B cell (primary cell): ENCODE measurements at regions of chr17 and their contacts with region 1.

Region 1: DNA sequence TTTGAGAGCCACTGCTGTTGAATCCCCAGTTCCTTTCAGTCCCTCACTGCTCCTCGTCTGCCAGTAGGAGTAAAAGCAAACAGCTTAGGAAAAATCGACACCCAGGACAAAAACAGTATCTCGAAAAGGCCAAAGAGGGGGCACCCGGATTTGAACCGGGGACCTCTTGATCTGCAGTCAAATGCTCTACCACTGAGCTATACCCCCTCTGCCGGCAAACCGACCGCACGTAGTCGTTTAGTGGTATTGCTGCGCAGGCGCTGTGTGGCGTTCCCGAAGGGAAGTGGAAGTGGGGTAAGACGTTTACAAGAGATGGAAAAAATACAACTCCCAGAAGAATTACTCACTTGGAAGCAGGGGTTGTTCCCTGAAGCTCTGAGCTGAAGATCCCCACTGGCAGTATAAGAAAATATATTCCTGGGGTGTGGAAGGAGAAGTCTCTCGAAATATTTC is 2.2 kb upstream of the PLXDC1 start:
- DNase-seq: peak; percentile 94
- ATAC-seq: peak; percentile 59
- H3K4me3 ChIP-seq: peak overlapping the region; percentile 62 to 93 (median 82)
- H3K4me3 Mint-ChIP-seq: peak overlapping the region; percentile 94
- H3K27ac ChIP-seq: peak overlapping the region; percentile 53 to 62
- H3K27ac Mint-ChIP-seq: peak overlapping the region; percentile 99
- H3K4me1 ChIP-seq: peaks cover 25 to 34% of the 10 kb centered on the region in 2 donors
- H3K4me1 Mint-ChIP-seq: peaks cover 30% of the 10 kb centered on the region
- H3K27me3 ChIP-seq: peaks cover 0 to 34% (median 17%) of the 10 kb centered on the region in 4 experiments
- H3K27me3 Mint-ChIP-seq: peaks cover 30% of the 10 kb centered on the region
- CTCF ChIP-seq: no peak

Region 2: DNA sequence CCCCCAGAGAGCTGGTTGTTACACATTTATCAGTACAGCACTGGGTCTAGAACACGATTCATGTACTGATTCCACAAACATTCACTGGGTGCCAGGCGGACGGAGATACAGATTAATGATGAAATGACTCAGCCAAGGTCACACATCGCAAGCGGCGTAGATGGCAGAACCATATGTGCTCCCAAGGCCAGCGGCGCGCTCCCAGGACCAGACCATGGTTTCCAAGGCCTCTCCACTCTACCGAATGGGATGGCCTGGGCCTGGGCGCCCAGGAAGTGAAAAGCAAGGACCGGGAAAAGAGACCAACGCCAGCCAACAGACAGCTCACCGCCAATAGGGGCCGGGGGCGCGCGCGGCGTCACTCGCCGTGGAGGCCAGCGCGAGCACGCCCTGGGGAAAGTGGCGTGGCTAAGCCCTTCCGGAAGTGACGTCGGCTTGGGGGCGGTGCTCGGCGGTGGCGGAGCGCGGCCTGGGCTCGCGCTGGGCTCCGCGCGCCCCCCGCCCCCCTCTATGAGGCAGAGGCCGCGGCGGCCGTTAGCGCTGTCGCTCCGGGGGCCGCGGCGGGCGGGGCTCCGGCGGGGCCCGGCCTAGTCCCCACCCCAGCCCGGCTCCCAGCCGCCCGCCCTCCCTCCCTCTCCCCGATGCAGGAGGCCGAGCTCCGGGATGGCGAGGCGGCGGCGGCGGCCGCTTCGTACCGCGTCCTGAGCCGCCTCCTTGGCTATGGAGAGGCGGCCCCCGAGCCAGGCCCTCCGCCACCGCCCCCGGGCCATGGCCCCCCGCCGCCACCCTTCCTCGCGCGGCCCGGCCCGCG is 802.0 kb before region 1 on chr17 and contains the start of gene SOCS7:
- CTCF ChIA-PET with region 1: no interaction called
- POLR2A ChIA-PET with region 1: no interaction called
- intact Hi-C with region 1: loop called (anchors 5 kb)
- DNase-seq: peak; percentile 94
- ATAC-seq: peak; percentile 92
- H3K4me3 ChIP-seq: peak within 1 kb of the TSS; percentile 38 to 78 (median 70)
- H3K4me3 Mint-ChIP-seq: peak within 1 kb of the TSS; percentile 99
- H3K27ac ChIP-seq: peak within 1 kb of the TSS; percentile 71 to 73
- H3K27ac Mint-ChIP-seq: peak within 1 kb of the TSS; percentile 97
- H3K4me1 ChIP-seq: peaks cover 11 to 19% of the 10 kb centered on the region in 2 donors
- H3K4me1 Mint-ChIP-seq: peaks cover 31% of the 10 kb centered on the region
- H3K27me3 ChIP-seq: no peaks in the 10 kb centered on the region
- H3K27me3 Mint-ChIP-seq: no peaks in the 10 kb centered on the region
- CTCF ChIP-seq: no peak
- total RNA-seq, gene SOCS7: 20.8 and 23.3 TPM in 2 replicates

Region 3: DNA sequence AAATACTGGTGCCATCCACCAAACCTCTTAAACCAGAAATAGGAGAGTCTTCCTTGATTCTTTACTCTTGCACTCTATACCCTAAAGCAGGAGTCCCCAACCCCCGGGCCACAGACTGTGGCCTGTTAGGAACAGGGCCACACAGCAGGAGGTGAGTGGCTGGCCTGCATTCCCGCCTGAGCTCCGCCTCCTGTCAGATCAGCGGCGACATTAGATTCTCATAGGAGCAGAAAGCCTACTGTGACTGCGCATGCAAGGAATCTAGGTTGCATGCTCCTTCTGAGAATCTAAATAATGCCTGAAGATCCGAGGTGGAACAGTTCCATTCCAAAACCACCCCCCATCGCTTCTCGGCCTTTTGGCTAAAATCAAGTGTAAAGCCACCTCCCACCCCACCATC is 517.6 kb before region 1 on chr17:
- CTCF ChIA-PET with region 1: no interaction called
- POLR2A ChIA-PET with region 1: no interaction called
- intact Hi-C with region 1: no loop called
- DNase-seq: no peak
- ATAC-seq: no peak
- H3K4me3 ChIP-seq: no peak overlapping the region
- H3K4me3 Mint-ChIP-seq: no peak overlapping the region
- H3K27ac ChIP-seq: no peak overlapping the region
- H3K27ac Mint-ChIP-seq: no peak overlapping the region
- H3K4me1 ChIP-seq: no peaks in the 10 kb centered on the region
- H3K4me1 Mint-ChIP-seq: no peaks in the 10 kb centered on the region
- H3K27me3 ChIP-seq: peaks cover 0 to 7% (median 2%) of the 10 kb centered on the region in 4 experiments
- H3K27me3 Mint-ChIP-seq: peaks cover 37% of the 10 kb centered on the region
- CTCF ChIP-seq: no peak

Region 4: GRCh38 chr17:38868817-38869525 is 284.7 kb before region 1 on chr17:
- CTCF ChIA-PET with region 1: interaction called, 22 read pairs
- POLR2A ChIA-PET with region 1: interaction called, 15 read pairs
- intact Hi-C with region 1: loop called (anchors 1 kb)
- DNase-seq: peak; percentile 93
- ATAC-seq: peak; percentile 50
- H3K4me3 ChIP-seq: peak overlapping the region; percentile 43 to 100 (median 100)
- H3K4me3 Mint-ChIP-seq: peak overlapping the region; percentile 99
- H3K27ac ChIP-seq: peak overlapping the region; percentile 78 to 87
- H3K27ac Mint-ChIP-seq: peak overlapping the region; percentile 99
- H3K4me1 ChIP-seq: peaks cover 40 to 55% of the 10 kb centered on the region in 2 donors
- H3K4me1 Mint-ChIP-seq: peaks cover 57% of the 10 kb centered on the region
- H3K27me3 ChIP-seq: no peaks in the 10 kb centered on the region
- H3K27me3 Mint-ChIP-seq: no peaks in the 10 kb centered on the region
- CTCF ChIP-seq: no peak

Region 5: GRCh38 chr17:38967290-38967738 is 186.3 kb before region 1 on chr17 and contains the start of gene FBXO47:
- CTCF ChIA-PET with region 1: interaction called, 8 read pairs
- POLR2A ChIA-PET with region 1: no interaction called
- intact Hi-C with region 1: loop called (anchors 1 kb)
- DNase-seq: peak; percentile 88
- ATAC-seq: peak; percentile 97
- H3K4me3 ChIP-seq: peak within 1 kb of the TSS in 4 of 5 experiments; percentile 30 to 50 (median 38)
- H3K4me3 Mint-ChIP-seq: peak within 1 kb of the TSS; percentile 82
- H3K27ac ChIP-seq: peak within 1 kb of the TSS in 1 of 2 donors; percentile 62
- H3K27ac Mint-ChIP-seq: peak within 1 kb of the TSS; percentile 88
- H3K4me1 ChIP-seq: peaks cover 0 to 13% of the 10 kb centered on the region in 2 donors
- H3K4me1 Mint-ChIP-seq: peaks cover 7% of the 10 kb centered on the region
- H3K27me3 ChIP-seq: no peaks in the 10 kb centered on the region
- H3K27me3 Mint-ChIP-seq: peaks cover 2% of the 10 kb centered on the region
- CTCF ChIP-seq: no peak
- total RNA-seq, gene FBXO47: not detected in 2 replicates

Region 6: GRCh38 chr17:39118674-39119419 is 34.8 kb before region 1 on chr17:
- CTCF ChIA-PET with region 1: interaction called, 19 read pairs
- POLR2A ChIA-PET with region 1: interaction called, 6 read pairs
- intact Hi-C with region 1: loop called (anchors 5 kb)
- DNase-seq: peak; percentile 83
- ATAC-seq: peak; percentile 94
- H3K4me3 ChIP-seq: no peak overlapping the region
- H3K4me3 Mint-ChIP-seq: peak overlapping the region; percentile 68
- H3K27ac ChIP-seq: peak overlapping the region in 1 of 2 donors; percentile 12
- H3K27ac Mint-ChIP-seq: peak overlapping the region; percentile 77
- H3K4me1 ChIP-seq: peaks cover 23 to 31% of the 10 kb centered on the region in 2 donors
- H3K4me1 Mint-ChIP-seq: peaks cover 25% of the 10 kb centered on the region
- H3K27me3 ChIP-seq: peaks cover 0 to under 1% (median 0%) of the 10 kb centered on the region in 4 experiments
- H3K27me3 Mint-ChIP-seq: no peaks in the 10 kb centered on the region
- CTCF ChIP-seq: no peak

Region 7: DNA sequence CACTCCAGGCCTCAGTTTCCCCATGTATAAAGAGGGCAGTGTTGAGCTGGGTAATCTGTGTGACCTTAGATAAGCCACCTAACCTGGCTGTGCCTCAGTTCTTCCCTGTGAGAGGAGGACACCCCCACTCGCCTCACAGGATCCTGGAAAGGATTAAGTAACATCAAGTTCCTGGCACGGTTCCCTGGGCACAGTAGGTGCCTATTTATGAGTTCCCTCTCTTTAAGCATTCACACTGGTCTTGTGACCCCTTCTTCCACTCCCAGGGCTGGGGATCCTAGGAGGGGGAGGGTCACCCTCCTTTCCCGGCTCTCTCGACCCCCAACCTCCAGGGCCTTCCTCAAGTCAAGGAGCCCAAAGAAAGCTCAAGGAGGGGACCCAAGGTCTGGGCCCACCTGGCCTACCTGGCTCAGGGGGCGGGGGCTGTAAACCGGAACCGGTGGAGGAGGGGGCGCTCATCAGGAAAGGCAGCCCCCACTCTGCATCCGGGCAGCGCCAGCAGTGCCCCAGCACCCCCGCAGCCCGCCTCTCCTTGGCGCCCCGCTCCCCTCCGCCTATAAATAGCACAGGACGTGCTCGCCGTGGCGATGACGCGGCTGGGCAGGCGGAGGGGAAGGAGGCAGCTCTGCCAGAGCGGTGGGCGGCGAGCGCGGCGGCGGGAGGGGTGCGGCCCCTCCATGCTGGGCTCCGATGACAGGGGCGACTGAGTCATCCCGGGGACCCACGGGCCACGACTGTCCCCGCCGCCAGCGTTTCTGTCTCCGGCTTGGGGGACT is 55.9 kb after region 1 on chr17:
- CTCF ChIA-PET with region 1: interaction called, 14 read pairs
- POLR2A ChIA-PET with region 1: no interaction called
- intact Hi-C with region 1: no loop called
- DNase-seq: peak; percentile 65
- ATAC-seq: peak; percentile 40
- H3K4me3 ChIP-seq: peak overlapping the region in 4 of 5 experiments; percentile 35 to 52 (median 48)
- H3K4me3 Mint-ChIP-seq: peak overlapping the region; percentile 77
- H3K27ac ChIP-seq: no peak overlapping the region
- H3K27ac Mint-ChIP-seq: peak overlapping the region; percentile 68
- H3K4me1 ChIP-seq: peaks cover 32 to 39% of the 10 kb centered on the region in 2 donors
- H3K4me1 Mint-ChIP-seq: peaks cover 33% of the 10 kb centered on the region
- H3K27me3 ChIP-seq: peaks cover 0 to 12% (median 3%) of the 10 kb centered on the region in 4 experiments
- H3K27me3 Mint-ChIP-seq: no peaks in the 10 kb centered on the region
- CTCF ChIP-seq: no peak